Caco-2 (cell line): ENCODE measurements at regions of chr22 and their contacts with region 1.

Region 1: GRCh38 chr22:37933711-37934376 is 19.6 kb downstream of the C22orf23 start:
- DNase-seq: peak; percentile 82 to 90
- H3K4me3 ChIP-seq: no peak overlapping the region
- H3K4me3 Mint-ChIP-seq: no peak overlapping the region
- H3K27ac Mint-ChIP-seq: peak overlapping the region; percentile 78
- H3K4me1 ChIP-seq: no peaks in the 10 kb centered on the region
- H3K4me1 Mint-ChIP-seq: peaks cover 8% of the 10 kb centered on the region
- H3K27me3 ChIP-seq: no peaks in the 10 kb centered on the region
- H3K27me3 Mint-ChIP-seq: no peaks in the 10 kb centered on the region
- CTCF ChIP-seq: peak; percentile 81 to 97

Region 2: GRCh38 chr22:37807410-37808293 is 126.2 kb before region 1 on chr22 and contains the start of gene GCAT:
- CTCF ChIA-PET with region 1: no interaction called
- POLR2A ChIA-PET with region 1: no interaction called
- intact Hi-C with region 1: no loop called
- DNase-seq: peak; percentile 94 to 96
- H3K4me3 ChIP-seq: peak within 1 kb of the TSS; percentile 46
- H3K4me3 Mint-ChIP-seq: peak within 1 kb of the TSS; percentile 90
- H3K27ac Mint-ChIP-seq: peak within 1 kb of the TSS; percentile 92
- H3K4me1 ChIP-seq: peaks cover 13% of the 10 kb centered on the region
- H3K4me1 Mint-ChIP-seq: peaks cover 25% of the 10 kb centered on the region
- H3K27me3 ChIP-seq: no peaks in the 10 kb centered on the region
- H3K27me3 Mint-ChIP-seq: no peaks in the 10 kb centered on the region
- CTCF ChIP-seq: no peak
- total RNA-seq, gene GCAT: 24.4 and 24.8 TPM in 2 replicates

Region 3: DNA sequence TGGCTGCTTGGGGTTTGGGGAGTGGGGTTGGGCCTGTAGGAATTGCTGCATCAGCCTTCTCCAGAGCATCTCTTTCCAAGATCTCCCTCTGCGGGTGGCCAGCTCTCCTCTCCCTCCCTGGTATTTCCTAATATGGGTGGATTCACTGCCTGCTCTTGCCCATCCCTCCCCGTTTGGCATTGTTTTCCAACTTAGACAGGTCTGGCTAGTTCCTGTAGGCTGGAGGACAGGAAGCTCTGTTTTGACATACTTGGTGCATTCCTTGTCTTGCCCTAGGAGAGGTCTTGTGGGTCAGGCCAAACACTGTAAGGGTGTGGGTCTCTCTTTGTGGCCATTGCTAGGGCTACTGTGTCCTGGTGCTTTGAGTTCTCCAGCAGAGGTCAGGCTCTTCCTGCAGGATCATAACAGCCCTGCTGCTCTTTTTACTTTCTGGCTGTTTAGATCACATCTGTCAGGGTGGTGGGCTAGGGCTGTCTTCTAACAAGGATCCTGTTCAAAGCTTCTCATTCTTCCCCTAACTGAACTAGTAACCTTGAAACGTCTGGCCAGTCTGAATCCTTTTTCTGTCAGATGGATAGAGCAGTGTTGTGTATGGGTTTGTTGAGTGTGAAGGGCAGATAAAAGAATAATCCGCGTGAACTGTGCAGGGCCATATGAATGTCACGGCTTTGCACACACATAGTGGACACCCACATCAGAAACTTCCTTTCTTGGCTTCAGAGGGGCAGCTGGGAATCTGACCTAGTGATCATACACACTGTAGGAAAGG is 46.0 kb before region 1 on chr22:
- CTCF ChIA-PET with region 1: interaction called, 7 read pairs
- POLR2A ChIA-PET with region 1: interaction called, 3 read pairs
- intact Hi-C with region 1: loop called (anchors 1 kb)
- DNase-seq: peak; percentile 81
- H3K4me3 ChIP-seq: no peak overlapping the region
- H3K4me3 Mint-ChIP-seq: no peak overlapping the region
- H3K27ac Mint-ChIP-seq: peak overlapping the region; percentile 74
- H3K4me1 ChIP-seq: peaks cover 17% of the 10 kb centered on the region
- H3K4me1 Mint-ChIP-seq: peaks cover 24% of the 10 kb centered on the region
- H3K27me3 ChIP-seq: no peaks in the 10 kb centered on the region
- H3K27me3 Mint-ChIP-seq: no peaks in the 10 kb centered on the region
- CTCF ChIP-seq: peak; percentile 48 to 52

Region 4: DNA sequence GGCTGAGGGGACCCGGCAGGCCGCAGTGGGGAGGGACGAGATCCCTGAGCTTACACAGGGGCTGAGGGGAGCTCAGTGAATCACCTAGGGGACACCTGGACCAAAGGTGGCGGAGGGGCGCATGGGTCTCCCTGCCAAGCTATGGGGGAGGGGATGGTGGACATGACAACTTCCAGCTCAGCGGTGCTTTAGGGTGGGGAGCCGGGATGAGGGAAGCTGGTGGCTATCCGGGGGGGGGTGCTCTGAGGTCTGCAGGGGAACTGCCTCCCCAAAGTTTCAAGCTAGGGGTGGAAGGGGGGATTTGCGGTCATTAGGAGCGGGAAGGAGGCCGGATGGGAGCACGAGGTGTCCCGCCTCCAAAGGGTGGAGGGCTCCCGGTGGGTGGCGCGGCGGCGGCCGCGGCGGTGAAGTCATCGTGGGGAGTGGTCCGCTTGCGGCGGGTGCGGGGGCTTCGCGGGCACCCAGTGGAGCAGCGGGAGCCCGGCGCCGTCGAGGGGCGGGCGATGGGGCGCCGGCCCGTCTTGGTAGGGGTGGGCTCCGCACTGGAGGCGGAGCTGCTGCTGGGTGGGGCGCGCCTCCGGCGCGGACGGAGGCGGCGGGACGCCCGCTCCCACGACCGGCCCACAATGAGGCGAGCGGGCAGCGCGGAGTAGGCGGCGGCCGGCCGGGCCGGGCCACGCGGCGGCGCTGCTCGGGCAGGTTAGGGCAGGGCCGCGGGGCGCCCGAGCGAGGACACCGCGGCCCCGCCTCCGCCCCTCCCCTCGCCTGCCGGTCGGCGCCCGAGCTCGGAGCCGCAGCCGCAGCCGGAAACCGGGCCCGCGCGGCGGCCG is 28.1 kb before region 1 on chr22 and contains the start of gene MICALL1:
- CTCF ChIA-PET with region 1: interaction called, 3 read pairs
- POLR2A ChIA-PET with region 1: no interaction called
- intact Hi-C with region 1: loop called (anchors 1 kb)
- DNase-seq: peak; percentile 68 to 89
- H3K4me3 ChIP-seq: peak within 1 kb of the TSS; percentile 69
- H3K4me3 Mint-ChIP-seq: peak within 1 kb of the TSS; percentile 91
- H3K27ac Mint-ChIP-seq: peak within 1 kb of the TSS; percentile 95
- H3K4me1 ChIP-seq: peaks cover 25% of the 10 kb centered on the region
- H3K4me1 Mint-ChIP-seq: peaks cover 15% of the 10 kb centered on the region
- H3K27me3 ChIP-seq: no peaks in the 10 kb centered on the region
- H3K27me3 Mint-ChIP-seq: no peaks in the 10 kb centered on the region
- CTCF ChIP-seq: no peak
- total RNA-seq, gene MICALL1: 43.5 and 46.7 TPM in 2 replicates

Region 5: GRCh38 chr22:37957232-37957631 is 23.4 kb after region 1 on chr22:
- CTCF ChIA-PET with region 1: no interaction called
- POLR2A ChIA-PET with region 1: no interaction called
- intact Hi-C with region 1: no loop called
- DNase-seq: no peak
- H3K4me3 ChIP-seq: no peak overlapping the region
- H3K4me3 Mint-ChIP-seq: no peak overlapping the region
- H3K27ac Mint-ChIP-seq: no peak overlapping the region
- H3K4me1 ChIP-seq: peaks cover 5% of the 10 kb centered on the region; the same call in 1 of the 2 replicates
- H3K4me1 Mint-ChIP-seq: peaks cover 10% of the 10 kb centered on the region
- H3K27me3 ChIP-seq: no peaks in the 10 kb centered on the region
- H3K27me3 Mint-ChIP-seq: no peaks in the 10 kb centered on the region
- CTCF ChIP-seq: no peak